Right ventricle myocardium superior (tissue), 1 donor: ENCODE measurements at regions of chr11 and their contacts with region 1.

Region 1: GRCh38 chr11:118488480-118489109 is 38.7 kb upstream of the TTC36 start:
- DNase-seq: peak; percentile 48
- ATAC-seq: peak; percentile 72

Region 2: DNA sequence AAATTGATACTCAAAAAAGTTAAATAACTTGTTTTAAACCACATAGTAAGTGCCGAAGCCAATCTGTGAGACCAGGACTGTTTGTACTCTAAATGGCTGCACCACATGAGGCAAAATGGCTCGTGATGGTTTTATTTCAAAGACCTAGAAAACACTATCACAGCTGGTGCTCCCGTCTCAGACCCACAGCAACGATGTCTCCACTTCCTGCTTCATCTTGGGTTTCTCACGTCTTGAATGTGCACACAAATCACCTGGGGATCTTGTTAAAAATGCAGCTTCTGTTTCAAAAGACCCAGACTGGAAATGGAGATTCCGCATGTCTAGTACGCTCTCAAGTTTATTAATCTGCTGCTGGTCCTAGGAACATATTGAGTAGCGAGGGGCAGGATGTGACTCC is 182.9 kb before region 1 on chr11:
- intact Hi-C with region 1: no loop called
- DNase-seq: no peak
- ATAC-seq: no peak

Region 3: DNA sequence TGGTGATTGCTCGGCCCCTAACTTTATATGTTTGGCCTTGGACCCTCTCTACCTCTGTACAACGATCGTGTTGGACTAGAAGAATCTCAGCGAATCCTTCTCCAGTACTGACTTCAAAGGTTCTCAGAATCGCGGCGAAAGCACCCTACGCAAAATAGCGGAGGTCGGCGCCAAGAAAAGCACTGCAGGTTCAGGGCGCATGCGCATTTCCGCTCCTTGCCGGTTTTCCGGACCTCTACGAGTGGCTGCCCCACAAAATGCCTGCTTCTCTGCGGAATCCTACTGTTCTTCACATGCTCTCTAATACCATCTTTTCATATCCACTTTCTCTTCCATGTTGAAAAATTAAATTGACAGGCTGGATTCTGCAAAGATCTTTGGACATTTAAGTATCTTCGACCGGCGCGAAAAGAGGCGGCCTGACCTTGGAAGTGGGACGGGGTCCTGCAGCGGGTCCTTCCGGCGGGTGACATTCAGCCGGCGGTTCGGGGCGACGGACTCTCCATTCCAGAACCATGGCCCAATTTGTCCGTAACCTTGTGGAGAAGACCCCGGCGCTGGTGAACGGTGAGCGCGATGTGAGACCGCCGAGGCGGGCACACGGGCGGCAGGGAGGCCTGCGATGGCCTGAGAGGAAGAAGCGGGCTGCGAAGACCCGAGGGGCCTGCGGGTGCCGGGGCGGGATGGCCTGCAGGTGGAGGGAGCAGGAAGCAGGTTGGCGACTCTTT is 87.3 kb before region 1 on chr11 and contains the start of gene ATP5MG:
- intact Hi-C with region 1: loop called (anchors 5 kb)
- DNase-seq: peak; percentile 96
- ATAC-seq: peak; percentile 93
- total RNA-seq, gene ATP5MG: 748 TPM

Region 4: GRCh38 chr11:118435893-118436624 is 52.5 kb before region 1 on chr11 and contains the start of gene KMT2A:
- intact Hi-C with region 1: loop called (anchors 10 kb)
- DNase-seq: peak; percentile 99
- ATAC-seq: peak; percentile 91
- total RNA-seq, gene KMT2A: 23.6 TPM